ENCODE measurements at regions of chr4 and their contacts with region 1.

Region 1: DNA sequence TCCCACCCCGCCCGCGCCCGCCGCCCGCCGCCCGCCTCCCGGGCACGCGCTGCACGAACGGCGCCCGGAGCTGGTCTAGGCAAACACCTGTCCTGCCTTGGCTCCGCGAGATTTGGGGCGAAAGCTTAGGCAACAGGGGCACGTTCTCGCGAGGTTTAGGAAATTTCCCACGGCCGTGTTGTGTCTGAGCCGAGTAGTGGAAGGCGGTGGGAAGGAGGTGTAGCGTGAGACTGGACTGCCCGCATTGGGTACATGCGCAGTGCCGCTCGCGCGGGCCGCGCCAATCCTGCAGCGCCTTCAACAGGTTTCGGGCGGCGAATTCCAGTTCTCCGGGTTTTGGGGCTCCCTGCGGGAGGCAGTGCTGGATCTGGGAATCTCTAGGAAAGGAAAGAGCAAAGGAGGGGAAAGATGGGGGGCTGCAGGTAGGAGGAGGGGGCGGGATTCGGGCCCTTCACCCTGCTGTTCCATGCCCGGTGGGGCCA is 1.3 kb upstream of the RBPJ start:
- DNase-seq: peak; percentile 88
- ATAC-seq: peak; percentile 72
- H3K4me3 Mint-ChIP-seq: peak overlapping the region; percentile 99
- H3K27ac Mint-ChIP-seq: peak overlapping the region; percentile 99
- H3K4me1 Mint-ChIP-seq: peaks cover 35% of the 10 kb centered on the region
- H3K27me3 Mint-ChIP-seq: no peaks in the 10 kb centered on the region
- CTCF ChIP-seq: no peak

Region 2: GRCh38 chr4:25234390-25235370 is 1084.8 kb before region 1 on chr4:
- CTCF ChIA-PET with region 1: no interaction called
- POLR2A ChIA-PET with region 1: no interaction called
- intact Hi-C with region 1: loop called (anchors 10 kb)
- DNase-seq: no peak
- ATAC-seq: peak; percentile 53
- H3K4me3 Mint-ChIP-seq: peak overlapping the region; percentile 90
- H3K27ac Mint-ChIP-seq: peak overlapping the region; percentile 95
- H3K4me1 Mint-ChIP-seq: peaks cover 47% of the 10 kb centered on the region
- H3K27me3 Mint-ChIP-seq: no peaks in the 10 kb centered on the region
- CTCF ChIP-seq: no peak

Region 3: GRCh38 chr4:25913851-25914669 is 405.4 kb before region 1 on chr4 and contains the start of gene SMIM20:
- CTCF ChIA-PET with region 1: no interaction called
- POLR2A ChIA-PET with region 1: interaction called, 23 read pairs
- intact Hi-C with region 1: loop called (anchors 1 kb)
- DNase-seq: peak; percentile 85
- ATAC-seq: peak; percentile 92
- H3K4me3 Mint-ChIP-seq: peak within 1 kb of the TSS; percentile 99
- H3K27ac Mint-ChIP-seq: peak within 1 kb of the TSS; percentile 97
- H3K4me1 Mint-ChIP-seq: peaks cover 36% of the 10 kb centered on the region
- H3K27me3 Mint-ChIP-seq: no peaks in the 10 kb centered on the region
- CTCF ChIP-seq: no peak
- total RNA-seq, gene SMIM20: 16.6 and 18.7 TPM in 2 replicates

Region 4: GRCh38 chr4:26088433-26088928 is 231.0 kb before region 1 on chr4:
- CTCF ChIA-PET with region 1: interaction called, 4 read pairs
- POLR2A ChIA-PET with region 1: interaction called, 15 read pairs
- intact Hi-C with region 1: loop called (anchors 1 kb)
- DNase-seq: no peak
- ATAC-seq: peak; percentile 93
- H3K4me3 Mint-ChIP-seq: peak overlapping the region; percentile 48
- H3K27ac Mint-ChIP-seq: peak overlapping the region; percentile 79
- H3K4me1 Mint-ChIP-seq: peaks cover 24% of the 10 kb centered on the region
- H3K27me3 Mint-ChIP-seq: peaks cover 2% of the 10 kb centered on the region
- CTCF ChIP-seq: no peak

Region 5: DNA sequence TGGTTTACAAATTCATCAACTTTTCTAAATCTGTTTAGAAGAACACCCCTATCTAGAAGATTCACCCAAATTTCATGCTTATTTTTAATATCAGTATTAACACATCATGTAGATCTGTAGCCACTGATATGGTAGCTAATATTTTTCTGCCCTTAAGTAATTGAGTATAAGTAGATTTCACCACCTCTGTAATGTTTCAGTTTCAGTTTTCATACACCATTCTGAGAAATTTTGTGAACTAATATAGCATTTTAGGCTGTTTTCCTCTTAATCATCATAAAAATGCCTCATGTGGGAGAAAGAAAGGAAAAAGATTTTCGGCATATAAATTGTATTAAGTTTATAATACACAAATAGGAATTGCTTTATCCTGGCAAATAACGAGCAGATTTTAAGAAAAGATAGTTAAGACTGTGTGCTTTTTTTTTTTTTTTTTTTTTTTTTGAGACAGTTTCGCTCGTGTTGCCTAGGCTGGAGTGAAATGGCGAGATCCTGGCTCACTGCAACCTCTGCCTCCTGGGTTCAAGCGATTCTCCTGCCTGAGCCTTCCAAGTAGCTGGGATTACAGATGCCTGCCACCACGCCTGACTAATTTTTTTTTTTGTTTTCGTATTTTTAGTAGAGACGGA is 20.1 kb before region 1 on chr4:
- CTCF ChIA-PET with region 1: no interaction called
- POLR2A ChIA-PET with region 1: no interaction called
- intact Hi-C with region 1: loop called (anchors 2 kb)
- DNase-seq: no peak
- ATAC-seq: no peak
- H3K4me3 Mint-ChIP-seq: no peak overlapping the region
- H3K27ac Mint-ChIP-seq: no peak overlapping the region
- H3K4me1 Mint-ChIP-seq: no peaks in the 10 kb centered on the region
- H3K27me3 Mint-ChIP-seq: peaks cover under 1% of the 10 kb centered on the region
- CTCF ChIP-seq: no peak

Region 6: DNA sequence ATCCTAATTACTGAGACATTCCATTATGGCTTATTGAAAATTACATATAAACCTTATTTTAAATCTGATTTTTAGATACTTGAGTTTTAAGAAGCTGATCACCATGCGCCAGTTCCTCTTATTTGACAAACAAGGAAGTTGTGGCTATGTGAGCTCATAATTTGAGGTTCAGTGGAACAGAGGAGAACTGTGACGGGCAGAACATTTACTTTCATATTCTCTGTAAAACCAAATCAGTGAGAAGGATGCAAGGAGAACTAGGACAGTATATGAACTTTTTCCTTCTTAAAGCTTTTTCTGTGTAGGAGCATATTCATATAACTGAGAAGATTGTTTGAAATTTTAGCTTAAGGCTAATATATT is 566.4 kb after region 1 on chr4:
- CTCF ChIA-PET with region 1: no interaction called
- POLR2A ChIA-PET with region 1: interaction called, 10 read pairs
- intact Hi-C with region 1: no loop called
- DNase-seq: no peak
- ATAC-seq: peak; percentile 67
- H3K4me3 Mint-ChIP-seq: peak overlapping the region; percentile 73
- H3K27ac Mint-ChIP-seq: peak overlapping the region; percentile 95
- H3K4me1 Mint-ChIP-seq: peaks cover 90% of the 10 kb centered on the region
- H3K27me3 Mint-ChIP-seq: no peaks in the 10 kb centered on the region
- CTCF ChIP-seq: no peak

Measured in activated B cell treated with CpG ODN at 0.5 μM for 24 hours (primary cell).